GM10248 (cell line): ENCODE measurements at regions of chr12 and their contacts with region 1.

Region 1: DNA sequence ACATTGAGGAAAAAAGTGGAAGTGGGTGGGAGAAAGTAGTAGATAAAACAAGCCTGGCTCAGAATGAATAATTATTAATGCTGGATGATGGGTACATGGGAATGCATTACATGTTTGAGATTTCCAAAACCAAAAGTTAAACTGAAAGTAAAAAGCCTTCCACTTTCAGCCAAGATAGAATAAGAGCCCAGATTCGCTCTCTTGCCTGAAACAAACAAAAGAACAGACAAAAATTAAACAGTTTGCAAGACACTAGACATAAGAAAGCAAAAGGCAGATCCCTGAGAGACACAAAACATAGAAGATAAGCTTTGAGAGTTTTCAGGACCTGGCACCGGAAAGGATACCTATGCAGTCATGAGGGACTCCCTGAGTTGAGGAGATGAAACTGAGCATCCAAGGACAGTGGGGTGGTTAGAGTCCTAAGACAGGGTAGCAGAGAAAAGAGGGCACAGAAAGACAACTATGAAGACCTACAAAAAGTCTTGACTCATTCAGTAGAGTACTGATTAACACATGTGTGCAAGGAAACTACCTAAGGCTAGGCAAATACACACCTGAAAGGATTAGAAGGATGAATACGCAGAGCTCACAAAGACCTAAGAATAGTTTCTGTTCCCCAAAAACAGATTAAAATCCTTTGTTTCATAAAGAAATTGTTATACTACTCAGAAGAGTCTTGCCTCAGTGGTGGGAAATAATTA is 54.1 kb downstream of the CEP83 start:
- DNase-seq: peak; percentile 25
- CTCF ChIP-seq: no peak

Region 2: GRCh38 chr12:94418517-94418916 is 13.0 kb after region 1 on chr12:
- CTCF ChIA-PET with region 1: interaction called, 14 read pairs
- POLR2A ChIA-PET with region 1: no interaction called
- DNase-seq: no peak
- CTCF ChIP-seq: no peak